Common myeloid progenitor, CD34-positive (primary cell): ENCODE measurements at regions of chr7 and their contacts with region 1.

Region 1: GRCh38 chr7:132580717-132581285 is 4.5 kb upstream of the PLXNA4 start:
- DNase-seq: peak; percentile 87 to 92 (median 91)
- H3K4me3 ChIP-seq: no peak overlapping the region
- H3K27ac ChIP-seq: no peak overlapping the region
- H3K4me1 ChIP-seq: peaks cover 0 to 16% (median 15%) of the 10 kb centered on the region in 4 experiments
- H3K27me3 ChIP-seq: peaks cover 0 to 30% (median 15%) of the 10 kb centered on the region in 5 experiments

Region 2: DNA sequence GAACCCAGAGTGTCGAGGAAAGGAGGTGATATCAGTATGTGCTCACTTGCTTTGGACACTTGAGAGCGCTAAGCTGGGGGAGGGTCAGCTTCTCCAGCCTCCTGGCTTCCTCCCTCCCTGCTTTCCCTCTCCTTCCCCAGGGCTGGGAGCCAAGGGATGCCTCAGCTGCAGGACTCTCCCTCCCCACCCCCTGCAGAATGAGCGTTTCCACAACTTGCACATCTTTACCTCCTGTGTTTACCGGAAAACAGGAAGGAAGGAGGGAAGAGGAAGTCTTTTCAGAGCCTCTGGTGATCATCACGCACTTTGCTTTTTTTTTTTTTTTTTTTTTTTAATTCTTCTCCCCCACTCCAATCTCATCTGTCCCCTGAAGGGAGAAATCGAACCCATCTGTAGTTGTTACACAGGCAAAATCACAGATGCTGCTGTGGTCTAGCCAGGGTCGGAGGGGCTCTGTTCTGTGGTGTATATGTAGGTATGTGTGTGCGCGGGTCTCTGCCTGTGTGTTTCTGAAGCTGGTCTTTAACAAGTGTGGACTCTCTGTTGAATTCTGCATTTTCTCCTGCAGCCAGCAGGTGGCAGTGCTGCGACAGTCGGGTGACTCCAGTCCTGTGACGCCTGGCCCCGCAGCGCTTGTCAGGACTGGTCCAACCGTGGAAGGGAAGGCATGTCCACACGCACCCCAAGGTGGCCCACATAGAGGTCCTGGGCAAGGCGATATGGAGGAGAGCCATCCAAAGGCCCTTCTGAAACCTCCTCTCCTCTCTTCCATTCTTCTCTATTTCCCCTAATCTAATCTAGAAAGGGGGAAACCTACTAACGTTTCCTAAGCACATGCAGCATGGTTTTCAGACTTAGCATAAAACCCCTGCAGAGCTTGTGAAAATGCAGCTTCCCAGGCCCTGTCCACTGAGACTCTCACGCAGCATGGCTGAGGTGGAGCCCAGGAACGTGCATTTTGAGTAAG is 262.2 kb before region 1 on chr7:
- CTCF ChIA-PET with region 1: interaction called, 38 read pairs
- POLR2A ChIA-PET with region 1: no interaction called
- DNase-seq: peak; percentile 86 to 94 (median 90)
- H3K4me3 ChIP-seq: peak overlapping the region in 3 of 7 experiments; percentile 4 to 52 (median 9)
- H3K27ac ChIP-seq: no peak overlapping the region
- H3K4me1 ChIP-seq: peaks cover 0 to 14% (median 8%) of the 10 kb centered on the region in 4 experiments
- H3K27me3 ChIP-seq: peaks cover 0 to 41% (median 6%) of the 10 kb centered on the region in 5 experiments

Region 3: GRCh38 chr7:132394283-132395198 is 186.3 kb before region 1 on chr7:
- CTCF ChIA-PET with region 1: interaction called, 43 read pairs
- POLR2A ChIA-PET with region 1: interaction called, 3 read pairs
- DNase-seq: peak; percentile 31 to 66 (median 58)
- H3K4me3 ChIP-seq: no peak overlapping the region
- H3K27ac ChIP-seq: no peak overlapping the region
- H3K4me1 ChIP-seq: no peaks in the 10 kb centered on the region
- H3K27me3 ChIP-seq: peaks cover 0 to 2% (median 0%) of the 10 kb centered on the region in 5 experiments

Region 4: DNA sequence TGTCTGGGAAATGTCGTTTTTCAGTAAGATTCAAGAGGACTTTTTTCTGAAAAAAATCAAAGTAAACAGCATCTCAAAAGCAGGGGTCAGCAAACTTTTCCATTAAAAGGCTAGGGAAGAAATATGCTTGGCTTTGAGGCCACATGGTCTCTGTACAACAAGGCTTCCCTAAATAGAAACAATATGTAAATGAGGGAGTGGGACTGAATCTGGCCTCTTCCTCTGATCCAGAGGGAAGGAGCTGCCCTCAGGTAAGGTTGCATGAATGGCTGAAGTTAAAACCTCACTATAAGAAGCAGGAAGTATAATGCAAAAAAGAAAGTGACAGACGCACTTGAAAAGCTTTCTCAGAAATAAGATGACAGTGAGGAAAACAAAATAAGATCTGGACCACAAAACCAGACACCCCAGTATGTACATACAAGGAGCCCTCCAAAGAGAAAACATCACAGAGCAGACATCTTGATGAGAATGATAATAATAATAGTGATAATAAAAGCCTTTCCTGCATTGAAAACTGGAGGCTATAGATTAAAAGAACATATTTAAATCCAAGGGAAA is 119.7 kb before region 1 on chr7:
- CTCF ChIA-PET with region 1: no interaction called
- POLR2A ChIA-PET with region 1: no interaction called
- DNase-seq: no peak
- H3K4me3 ChIP-seq: no peak overlapping the region
- H3K27ac ChIP-seq: no peak overlapping the region
- H3K4me1 ChIP-seq: peaks cover 0 to 24% (median 5%) of the 10 kb centered on the region in 4 experiments
- H3K27me3 ChIP-seq: no peaks in the 10 kb centered on the region

Region 5: GRCh38 chr7:132603220-132603833 is 22.5 kb after region 1 on chr7:
- CTCF ChIA-PET with region 1: interaction called, 13 read pairs
- POLR2A ChIA-PET with region 1: no interaction called
- DNase-seq: no peak
- H3K4me3 ChIP-seq: no peak overlapping the region
- H3K27ac ChIP-seq: no peak overlapping the region
- H3K4me1 ChIP-seq: no peaks in the 10 kb centered on the region
- H3K27me3 ChIP-seq: no peaks in the 10 kb centered on the region